ENCODE measurements at regions of chr12 and their contacts with region 1.

Region 1: DNA sequence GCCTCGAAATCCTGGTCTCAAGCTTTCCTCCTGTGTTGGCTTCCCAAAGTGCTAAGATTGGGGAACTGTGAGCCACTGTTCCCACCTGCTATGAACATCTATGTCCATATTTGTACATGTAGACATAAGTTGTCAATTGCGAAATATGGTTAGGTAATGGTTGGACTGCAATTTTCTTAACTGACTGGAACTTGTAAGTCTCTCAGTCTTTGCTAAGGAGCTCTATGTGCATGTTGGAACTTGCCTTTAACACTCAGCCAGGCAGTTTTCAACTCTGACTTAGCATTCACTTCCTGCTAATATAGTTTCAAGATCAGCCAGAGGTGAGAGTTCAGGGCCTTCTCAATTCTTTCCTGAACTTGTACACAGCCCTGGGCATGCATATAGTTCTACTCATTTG is 44.5 kb upstream of the EEA1 start:
- DNase-seq: peak; percentile 90
- ATAC-seq: peak; percentile 19; the same call in 1 of the 2 replicates
- H3K4me3 ChIP-seq: no peak overlapping the region
- H3K27ac ChIP-seq: peak overlapping the region; percentile 81; the same call in 1 of the 2 replicates
- H3K4me1 ChIP-seq: peaks cover 8% of the 10 kb centered on the region
- H3K27me3 ChIP-seq: no peaks in the 10 kb centered on the region
- CTCF ChIP-seq: no peak
- POLR2A ChIP-seq: no peak
- RAD21 ChIP-seq: no peak

Region 2: GRCh38 chr12:92928962-92929915 is 44.4 kb before region 1 on chr12 and contains the start of gene EEA1:
- CTCF ChIA-PET with region 1: no interaction called
- POLR2A ChIA-PET with region 1: no interaction called
- dilution Hi-C with region 1: no loop called
- in situ Hi-C with region 1: no loop called
- intact Hi-C with region 1: loop called (anchors 5 kb)
- DNase-seq: peak; percentile 95
- ATAC-seq: peak; percentile 92
- H3K4me3 ChIP-seq: peak within 1 kb of the TSS; percentile 86
- H3K27ac ChIP-seq: peak within 1 kb of the TSS; percentile 100
- H3K4me1 ChIP-seq: peaks cover 8% of the 10 kb centered on the region
- H3K27me3 ChIP-seq: no peaks in the 10 kb centered on the region
- CTCF ChIP-seq: peak; percentile 34; the same call in 1 of the 2 replicates
- POLR2A ChIP-seq: peak; percentile 89
- RAD21 ChIP-seq: peak; percentile 27; the same call in 1 of the 2 replicates
- total RNA-seq, gene EEA1: 12.5 and 23.9 TPM in 2 replicates

Measured in IMR-90 (cell line).